ENCODE measurements at regions of chr3 and their contacts with region 1.

Region 1: DNA sequence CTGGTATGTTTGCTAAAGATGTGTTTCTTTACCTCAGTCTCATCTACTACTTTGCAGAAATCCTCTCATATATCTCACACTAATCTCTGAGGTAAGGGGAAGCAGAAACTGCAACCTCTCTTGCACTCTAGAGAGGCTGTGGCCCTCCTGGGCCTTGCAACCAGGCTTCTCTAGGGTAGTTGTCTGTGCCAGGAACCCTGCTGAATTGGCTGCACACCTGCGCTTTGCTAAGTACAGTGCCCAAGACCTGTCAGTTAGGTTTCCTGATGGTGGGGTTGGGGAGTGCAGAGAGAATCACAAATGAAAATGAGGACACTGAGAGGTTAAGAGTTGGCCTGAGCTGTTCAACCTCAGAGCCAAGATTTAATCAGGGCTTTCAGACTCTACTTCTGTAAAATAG is 117.2 kb upstream of the PLXNA1 start:
- DNase-seq: peak in 1 of 9 experiments; percentile 29
- ATAC-seq: no peak
- H3K4me3 ChIP-seq: no peak overlapping the region
- H3K4me3 Mint-ChIP-seq: no peak overlapping the region
- H3K27ac ChIP-seq: no peak overlapping the region
- H3K27ac Mint-ChIP-seq: no peak overlapping the region
- H3K4me1 ChIP-seq: no peaks in the 10 kb centered on the region
- H3K4me1 Mint-ChIP-seq: peaks cover 3% of the 10 kb centered on the region
- H3K27me3 ChIP-seq: no peaks in the 10 kb centered on the region
- H3K27me3 Mint-ChIP-seq: no peaks in the 10 kb centered on the region
- CTCF ChIP-seq: no peak

Region 2: DNA sequence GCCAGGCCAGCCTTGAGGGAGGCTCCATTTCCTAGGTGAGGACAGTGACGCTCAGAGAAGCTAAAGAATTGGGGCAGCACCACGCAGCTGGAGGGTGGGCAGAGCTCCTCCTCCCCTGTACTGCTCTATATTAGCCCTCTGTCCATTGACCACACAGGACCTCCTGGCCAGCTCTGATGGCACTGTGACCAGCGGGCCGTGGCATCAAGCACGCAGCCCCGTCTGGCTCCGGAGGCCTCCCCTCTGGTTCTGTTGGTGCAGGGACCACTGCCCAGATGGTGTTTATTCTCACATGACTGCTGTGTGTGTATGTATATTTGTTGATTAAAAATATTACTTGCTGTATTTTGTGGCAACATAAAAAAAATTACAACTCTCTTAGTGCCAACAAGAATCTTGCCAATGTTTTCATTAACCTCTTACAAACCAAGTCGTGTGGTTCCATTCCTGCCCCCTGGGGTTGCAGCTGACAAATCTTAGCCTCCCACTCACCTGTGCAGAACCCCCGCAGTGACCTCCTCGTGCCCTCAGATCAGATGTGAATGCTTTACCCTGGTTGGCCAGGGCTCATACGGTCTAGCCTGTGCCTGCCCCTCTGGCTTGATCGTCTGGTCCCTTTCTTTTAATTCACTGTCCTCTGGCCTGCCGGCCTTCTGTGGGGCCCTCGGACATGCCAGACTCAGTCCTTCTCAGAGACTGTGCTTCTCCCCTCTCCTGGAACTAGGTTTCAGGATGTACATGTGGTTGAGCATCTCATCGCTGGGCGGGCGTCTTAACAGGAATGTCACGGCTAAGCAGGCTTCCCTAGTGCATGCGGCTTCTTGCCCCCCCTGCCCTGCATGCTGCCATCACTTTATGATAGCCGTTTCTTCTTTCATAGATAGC is 146.9 kb before region 1 on chr3:
- CTCF ChIA-PET with region 1: no interaction called
- POLR2A ChIA-PET with region 1: no interaction called
- intact Hi-C with region 1: no loop called
- DNase-seq: no peak
- ATAC-seq: no peak
- H3K4me3 ChIP-seq: no peak overlapping the region
- H3K4me3 Mint-ChIP-seq: no peak overlapping the region
- H3K27ac ChIP-seq: no peak overlapping the region
- H3K27ac Mint-ChIP-seq: no peak overlapping the region
- H3K4me1 ChIP-seq: no peaks in the 10 kb centered on the region
- H3K4me1 Mint-ChIP-seq: peaks cover 11% of the 10 kb centered on the region
- H3K27me3 ChIP-seq: no peaks in the 10 kb centered on the region
- H3K27me3 Mint-ChIP-seq: no peaks in the 10 kb centered on the region
- CTCF ChIP-seq: no peak

Region 3: DNA sequence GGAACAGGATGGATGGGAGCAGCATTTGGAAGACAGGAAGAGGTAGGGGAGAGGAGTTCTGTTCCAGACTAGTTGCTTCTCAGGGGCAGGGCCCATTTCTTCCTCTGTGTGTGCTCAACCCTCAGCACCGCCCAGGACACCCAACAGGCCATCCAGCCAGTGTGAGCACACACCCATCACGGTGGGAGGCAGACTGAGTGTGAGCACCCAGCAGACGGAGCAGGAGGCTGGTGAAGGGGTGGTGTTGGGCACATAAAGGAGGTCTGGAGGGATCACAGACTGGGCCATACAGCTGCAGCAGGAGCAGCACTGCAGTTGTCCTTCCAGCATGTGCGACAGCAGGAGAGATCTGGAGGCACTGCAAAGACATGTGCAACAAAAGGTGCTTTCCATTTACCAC is 28.7 kb after region 1 on chr3:
- CTCF ChIA-PET with region 1: no interaction called
- POLR2A ChIA-PET with region 1: no interaction called
- intact Hi-C with region 1: loop called in 1 of 2 experiments (anchors 1 kb)
- DNase-seq: no peak
- ATAC-seq: no peak
- H3K4me3 ChIP-seq: no peak overlapping the region
- H3K4me3 Mint-ChIP-seq: no peak overlapping the region
- H3K27ac ChIP-seq: no peak overlapping the region
- H3K27ac Mint-ChIP-seq: no peak overlapping the region
- H3K4me1 ChIP-seq: no peaks in the 10 kb centered on the region
- H3K4me1 Mint-ChIP-seq: no peaks in the 10 kb centered on the region
- H3K27me3 ChIP-seq: no peaks in the 10 kb centered on the region
- H3K27me3 Mint-ChIP-seq: no peaks in the 10 kb centered on the region
- CTCF ChIP-seq: no peak

Measured in CD8-positive, alpha-beta T cell (primary cell).